GM12878 (cell line): ENCODE measurements at regions of chr1 and their contacts with region 1.

Region 1: DNA sequence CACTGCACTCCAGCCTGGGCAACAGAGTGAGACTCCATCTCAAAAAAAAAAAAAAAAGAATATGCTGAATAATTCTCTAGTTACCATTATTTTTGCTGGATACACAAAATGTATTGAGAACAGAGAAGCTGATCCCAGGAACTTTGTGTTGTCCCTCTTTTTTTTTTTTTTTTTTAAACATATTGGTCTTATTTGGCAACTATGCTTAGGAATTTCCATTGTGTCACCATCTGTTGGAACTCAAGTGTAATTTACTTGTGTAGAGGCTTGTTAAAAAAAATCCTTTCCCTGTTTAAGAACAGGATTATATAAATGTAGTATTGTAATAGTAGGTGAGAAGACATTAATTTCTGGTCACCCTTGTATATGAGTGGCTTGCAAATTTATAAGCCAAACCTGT is 28.6 kb downstream of the CAMSAP2 start:
- DNase-seq: no peak
- ATAC-seq: no peak
- H3K4me3 ChIP-seq: no peak overlapping the region
- H3K27ac ChIP-seq: no peak overlapping the region
- H3K4me1 ChIP-seq: no peaks in the 10 kb centered on the region
- H3K27me3 ChIP-seq: no peaks in the 10 kb centered on the region
- CTCF ChIP-seq: no peak
- EP300 ChIP-seq: no peak
- POLR2A ChIP-seq: no peak
- RAD21 ChIP-seq: no peak

Region 2: DNA sequence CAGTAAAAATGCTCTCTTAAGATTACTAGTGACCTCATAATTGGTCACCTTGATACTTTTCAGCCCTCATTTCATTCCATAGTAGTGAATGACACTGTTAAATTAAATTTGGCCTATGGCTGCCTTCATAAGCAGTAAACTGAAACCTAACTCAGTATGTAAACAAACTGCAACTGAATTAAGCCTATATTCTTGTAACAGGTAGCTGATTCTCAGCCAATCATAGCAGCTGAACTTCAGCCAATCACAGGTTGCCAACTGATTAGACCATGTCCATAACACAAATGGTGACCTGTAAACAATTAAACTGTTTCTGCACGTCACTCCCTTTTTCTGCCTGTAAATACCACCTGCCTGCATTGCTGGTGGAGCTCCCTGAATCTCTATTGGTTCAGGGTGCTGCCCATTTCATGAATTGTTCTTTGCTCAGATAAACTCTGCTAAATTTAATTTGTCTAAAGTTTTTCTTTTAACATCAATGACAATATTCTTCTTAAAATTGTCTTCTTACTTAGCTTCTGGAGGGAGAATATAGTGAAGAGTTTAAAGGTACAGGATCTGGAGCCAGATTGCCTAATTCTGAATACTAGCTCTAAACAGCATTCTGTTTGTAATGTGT is 52.6 kb before region 1 on chr1:
- CTCF ChIA-PET with region 1: no interaction called
- POLR2A ChIA-PET with region 1: no interaction called
- RAD21 ChIA-PET with region 1: no interaction called
- SMC1A ChIA-PET with region 1: no interaction called
- in situ Hi-C with region 1: loop called (anchors 5 kb)
- intact Hi-C with region 1: no loop called
- DNase-seq: no peak
- ATAC-seq: no peak
- H3K4me3 ChIP-seq: no peak overlapping the region
- H3K27ac ChIP-seq: no peak overlapping the region
- H3K4me1 ChIP-seq: no peaks in the 10 kb centered on the region
- H3K27me3 ChIP-seq: no peaks in the 10 kb centered on the region
- CTCF ChIP-seq: no peak
- EP300 ChIP-seq: no peak
- POLR2A ChIP-seq: no peak
- RAD21 ChIP-seq: no peak